Calu3 (cell line): ENCODE measurements at regions of chr17 and their contacts with region 1.

Region 1: DNA sequence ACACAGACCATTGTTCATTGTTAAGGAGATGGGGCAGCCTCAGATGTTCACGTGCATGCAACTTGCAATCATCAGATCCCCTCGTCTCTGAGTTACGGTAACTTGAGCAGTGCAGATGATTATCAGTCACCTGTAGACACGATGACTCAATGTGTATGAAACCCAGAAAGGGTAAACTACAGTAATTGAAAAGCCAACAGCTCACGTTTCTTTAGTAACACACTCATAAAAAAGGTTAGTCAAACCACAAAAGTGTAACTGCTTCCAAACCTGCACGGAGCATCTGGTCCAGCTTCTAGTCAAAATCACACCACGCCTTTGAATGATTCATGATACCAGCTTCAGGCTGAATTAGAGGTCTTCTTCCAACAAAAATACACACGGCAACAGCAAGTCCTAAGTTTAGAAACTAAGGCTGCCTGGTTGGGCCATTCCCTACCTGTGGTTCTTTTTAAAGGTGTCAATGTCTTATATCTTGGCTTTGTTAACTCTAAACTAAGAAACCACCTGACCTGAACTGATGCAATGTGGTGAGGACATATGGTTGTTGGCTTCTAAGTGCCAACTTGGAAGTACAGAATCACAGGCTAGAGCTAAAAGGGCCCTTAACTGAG is 32.3 kb downstream of the GRB7 start:
- DNase-seq: peak; percentile 100
- H3K4me3 Mint-ChIP-seq: peak overlapping the region; percentile 10
- H3K27ac Mint-ChIP-seq: peak overlapping the region; percentile 60
- H3K4me1 Mint-ChIP-seq: peaks cover 72% of the 10 kb centered on the region
- H3K27me3 Mint-ChIP-seq: peaks cover 13% of the 10 kb centered on the region
- CTCF ChIP-seq: no peak

Region 2: DNA sequence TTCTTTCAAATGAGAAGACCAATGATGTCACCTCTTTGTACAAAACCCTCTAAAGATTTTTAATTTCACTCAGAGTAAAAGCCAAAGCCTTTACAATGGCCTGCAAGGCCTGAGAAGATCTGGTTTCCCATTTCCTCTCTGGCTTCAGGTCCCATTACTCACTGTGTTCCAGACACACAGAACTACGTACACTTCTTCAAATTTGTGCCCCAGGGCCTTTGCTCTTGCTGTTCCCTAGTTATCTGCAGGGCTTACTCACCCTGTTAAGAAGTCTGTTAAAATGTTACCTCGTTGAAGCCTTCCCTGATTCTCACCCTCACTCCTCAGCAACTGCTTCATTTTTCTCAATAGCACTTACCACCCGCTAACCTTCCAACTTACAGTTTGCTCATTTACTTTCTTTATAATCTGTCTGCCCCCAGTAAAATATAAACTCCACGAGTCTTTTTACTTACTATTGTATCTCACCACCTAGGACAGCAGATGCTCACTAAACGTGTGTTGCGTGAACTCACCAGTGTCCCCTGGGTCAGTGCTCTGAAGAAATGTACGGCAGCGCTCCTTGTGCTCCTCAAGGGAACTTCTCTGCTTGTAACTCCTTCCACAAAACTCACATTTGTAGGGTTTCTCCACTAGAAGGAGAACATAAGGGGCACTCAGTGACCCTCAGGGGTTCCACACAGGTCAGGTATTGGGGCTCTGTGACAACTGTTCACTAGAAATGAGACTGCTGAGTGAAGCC is 17.8 kb after region 1 on chr17:
- CTCF ChIA-PET with region 1: interaction called, 34,714 read pairs
- intact Hi-C with region 1: no loop called
- DNase-seq: peak; percentile 80
- H3K4me3 Mint-ChIP-seq: no peak overlapping the region
- H3K27ac Mint-ChIP-seq: no peak overlapping the region
- H3K4me1 Mint-ChIP-seq: peaks cover 29% of the 10 kb centered on the region
- H3K27me3 Mint-ChIP-seq: no peaks in the 10 kb centered on the region
- CTCF ChIP-seq: no peak

Region 3: GRCh38 chr17:39828443-39828842 is 58.4 kb after region 1 on chr17:
- CTCF ChIA-PET with region 1: interaction called, 1,211 read pairs
- intact Hi-C with region 1: loop called (anchors 1 kb)
- DNase-seq: peak; percentile 100
- H3K4me3 Mint-ChIP-seq: peak overlapping the region; percentile 36
- H3K27ac Mint-ChIP-seq: peak overlapping the region; percentile 48
- H3K4me1 Mint-ChIP-seq: peaks cover 17% of the 10 kb centered on the region
- H3K27me3 Mint-ChIP-seq: no peaks in the 10 kb centered on the region
- CTCF ChIP-seq: no peak

Region 4: DNA sequence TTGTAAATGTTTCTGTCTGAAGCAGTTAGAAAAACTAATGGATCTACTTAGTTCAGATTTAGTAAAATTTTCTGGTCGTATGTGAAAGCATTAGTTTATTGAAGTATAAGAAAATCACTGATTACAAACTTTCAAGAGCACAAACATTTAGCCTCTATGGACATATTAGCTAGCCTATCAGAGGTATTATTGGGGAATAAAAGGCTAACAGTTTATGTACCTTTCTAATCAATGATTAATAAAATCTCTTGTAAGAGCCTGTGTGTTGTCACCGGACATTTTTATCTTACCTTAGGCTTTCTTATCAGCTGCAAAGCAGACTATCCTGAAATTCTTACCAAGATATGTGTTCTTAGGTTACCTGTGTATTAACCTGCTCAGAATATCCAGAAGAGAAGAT is 119.1 kb after region 1 on chr17:
- CTCF ChIA-PET with region 1: interaction called, 1,212 read pairs
- intact Hi-C with region 1: loop called (anchors 1 kb)
- DNase-seq: peak; percentile 82
- H3K4me3 Mint-ChIP-seq: no peak overlapping the region
- H3K27ac Mint-ChIP-seq: no peak overlapping the region
- H3K4me1 Mint-ChIP-seq: peaks cover 26% of the 10 kb centered on the region
- H3K27me3 Mint-ChIP-seq: peaks cover 22% of the 10 kb centered on the region
- CTCF ChIP-seq: no peak

Region 5: DNA sequence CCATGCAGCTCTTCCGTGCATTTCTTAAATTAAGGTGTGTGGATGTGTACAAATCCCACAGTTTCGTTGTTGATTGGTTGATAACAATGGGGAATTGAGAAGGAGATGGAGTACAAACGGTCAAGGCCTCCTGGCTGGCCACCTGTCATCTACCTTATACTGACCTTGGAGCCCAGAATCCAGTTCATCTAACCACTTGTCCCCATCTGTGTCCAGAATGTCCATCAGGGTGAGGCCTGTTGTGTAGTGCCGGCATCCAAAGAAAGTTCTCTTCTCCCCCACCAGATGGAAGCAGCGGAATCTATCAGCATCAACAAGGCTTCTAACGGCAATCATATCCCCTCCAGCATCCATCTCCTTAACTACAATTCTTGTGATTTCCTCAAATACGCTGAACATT is 146.8 kb after region 1 on chr17:
- CTCF ChIA-PET with region 1: interaction called, 1,212 read pairs
- intact Hi-C with region 1: loop called (anchors 1 kb)
- DNase-seq: peak; percentile 94
- H3K4me3 Mint-ChIP-seq: no peak overlapping the region
- H3K27ac Mint-ChIP-seq: no peak overlapping the region
- H3K4me1 Mint-ChIP-seq: peaks cover 24% of the 10 kb centered on the region
- H3K27me3 Mint-ChIP-seq: no peaks in the 10 kb centered on the region
- CTCF ChIP-seq: no peak

Region 6: GRCh38 chr17:39952680-39953470 is 182.8 kb after region 1 on chr17:
- CTCF ChIA-PET with region 1: interaction called, 1,070 read pairs
- intact Hi-C with region 1: no loop called
- DNase-seq: peak; percentile 100
- H3K4me3 Mint-ChIP-seq: peak overlapping the region; percentile 58
- H3K27ac Mint-ChIP-seq: peak overlapping the region; percentile 18
- H3K4me1 Mint-ChIP-seq: peaks cover 42% of the 10 kb centered on the region
- H3K27me3 Mint-ChIP-seq: peaks cover 15% of the 10 kb centered on the region
- CTCF ChIP-seq: no peak

Region 7: DNA sequence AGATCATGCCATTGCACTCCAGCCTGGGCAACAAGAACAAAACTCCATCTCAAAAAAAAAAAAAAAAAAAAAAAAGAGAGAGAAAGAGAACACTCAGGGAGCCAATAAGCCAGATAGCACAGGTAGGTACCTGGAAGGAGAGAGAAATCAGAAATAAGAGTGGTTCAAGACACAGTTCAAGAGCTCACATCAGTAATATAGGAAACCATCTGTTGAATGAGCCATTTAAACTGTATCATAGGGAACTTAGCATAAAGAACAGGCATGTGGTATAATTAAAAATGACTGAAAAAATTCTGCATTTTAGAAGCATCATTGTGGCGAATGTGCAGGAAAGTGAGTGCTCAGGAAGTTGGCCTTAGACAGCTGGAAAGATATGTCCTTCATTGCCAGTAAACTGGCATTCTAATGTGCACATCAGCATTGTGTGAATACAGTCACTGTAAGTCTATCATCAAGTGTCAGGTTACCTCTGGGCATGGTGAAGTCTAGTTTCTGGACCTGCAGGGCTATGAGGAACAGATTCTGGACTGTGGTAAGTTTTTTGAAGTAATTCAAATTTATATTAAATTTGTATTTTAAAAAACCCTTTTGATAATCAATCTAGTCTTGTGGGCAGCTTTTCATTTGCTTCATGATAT is 1076.6 kb after region 1 on chr17:
- CTCF ChIA-PET with region 1: interaction called, 3 read pairs
- intact Hi-C with region 1: loop called (anchors 10 kb)
- DNase-seq: no peak
- H3K4me3 Mint-ChIP-seq: no peak overlapping the region
- H3K27ac Mint-ChIP-seq: no peak overlapping the region
- H3K4me1 Mint-ChIP-seq: peaks cover 52% of the 10 kb centered on the region
- H3K27me3 Mint-ChIP-seq: no peaks in the 10 kb centered on the region
- CTCF ChIP-seq: no peak